Activated CD8-positive, alpha-beta T cell treated with anti-CD3 and anti-CD28 coated beads for 36 hours (primary cell): ENCODE measurements at regions of chr16 and their contacts with region 1.

Region 1: DNA sequence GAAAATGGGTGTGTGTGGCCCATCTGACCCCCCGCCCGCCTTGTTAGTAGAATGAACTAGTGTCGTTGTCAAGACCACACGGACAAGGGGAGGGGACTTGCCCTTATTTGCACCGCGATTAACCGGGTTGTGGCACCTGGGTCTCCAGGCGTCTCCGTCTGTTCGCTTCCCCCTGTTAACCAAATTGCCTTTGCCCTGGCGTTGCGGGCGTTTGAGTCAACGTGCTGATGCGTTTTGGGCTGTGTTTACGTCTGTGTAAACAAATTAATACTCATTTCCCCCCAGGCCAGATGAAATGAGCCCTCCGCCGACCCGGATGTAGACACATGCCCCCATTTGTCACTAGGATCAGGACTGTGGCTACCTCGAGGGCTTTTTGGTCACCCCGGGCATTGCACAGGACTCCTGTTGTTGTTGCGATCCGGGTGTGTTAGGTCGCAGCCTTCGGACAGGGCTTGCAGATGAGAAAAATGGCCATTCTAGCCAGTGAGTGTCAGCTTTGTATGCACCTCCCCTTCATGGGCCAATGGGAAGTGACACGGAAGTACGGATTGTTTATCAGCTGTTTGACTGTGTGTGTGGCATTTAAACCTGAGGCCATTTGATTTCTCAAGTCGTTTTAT is 906 bp downstream of the RBL2 start:
- DNase-seq: peak; percentile 74
- ATAC-seq: peak; percentile 66
- H3K4me3 Mint-ChIP-seq: peak overlapping the region; percentile 99
- H3K27ac Mint-ChIP-seq: peak overlapping the region; percentile 97
- H3K4me1 Mint-ChIP-seq: peaks cover 36% of the 10 kb centered on the region
- H3K27me3 Mint-ChIP-seq: no peaks in the 10 kb centered on the region
- CTCF ChIP-seq: no peak

Region 2: DNA sequence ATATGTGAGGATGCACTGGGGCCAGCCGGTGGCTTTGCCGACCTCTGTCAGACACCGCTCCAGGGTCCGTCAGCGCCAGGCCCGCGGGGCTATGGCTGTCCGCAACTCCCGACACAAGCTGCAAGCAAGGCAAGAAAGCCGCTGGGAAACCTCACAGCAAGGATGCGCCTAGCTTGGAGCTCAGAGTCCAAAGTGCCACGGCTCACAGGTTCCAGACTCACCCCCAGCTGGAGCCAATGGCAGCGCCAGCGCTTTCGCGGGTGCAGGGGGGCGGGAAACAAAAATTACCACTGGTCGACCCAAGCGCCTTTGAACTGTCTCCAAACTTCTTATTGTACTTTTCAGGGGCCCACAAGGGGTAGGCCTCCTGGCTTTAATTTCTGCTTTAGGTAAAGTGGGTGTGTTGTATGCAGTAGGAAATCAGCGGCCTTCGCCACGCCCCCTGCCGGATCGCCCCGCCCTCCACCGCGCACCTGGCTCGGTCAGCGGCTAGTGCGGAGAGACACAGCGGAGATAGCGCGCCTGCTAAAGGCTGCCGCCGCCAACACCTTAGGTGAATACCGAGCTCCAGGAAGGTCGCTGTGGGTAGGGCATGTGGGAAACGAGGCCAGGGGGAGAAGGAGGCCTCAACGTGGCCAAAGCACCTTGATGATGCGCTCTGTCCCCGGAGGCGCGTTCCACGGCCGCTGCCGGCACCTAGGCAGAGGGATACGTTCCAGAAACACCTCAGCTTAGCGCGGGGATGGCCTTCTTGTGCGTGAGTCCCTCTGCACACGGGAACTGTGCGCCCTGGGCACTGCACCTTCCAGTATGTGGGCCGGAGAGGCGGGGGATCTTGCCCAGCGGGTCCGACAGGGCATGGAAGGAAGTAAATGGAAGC is 61.9 kb before region 1 on chr16:
- CTCF ChIA-PET with region 1: interaction called, 3 read pairs
- POLR2A ChIA-PET with region 1: no interaction called
- intact Hi-C with region 1: loop called (anchors 10 kb)
- DNase-seq: peak; percentile 80
- ATAC-seq: peak; percentile 94
- H3K4me3 Mint-ChIP-seq: peak overlapping the region; percentile 76
- H3K27ac Mint-ChIP-seq: peak overlapping the region; percentile 6
- H3K4me1 Mint-ChIP-seq: peaks cover 21% of the 10 kb centered on the region
- H3K27me3 Mint-ChIP-seq: no peaks in the 10 kb centered on the region
- CTCF ChIP-seq: no peak

Region 3: DNA sequence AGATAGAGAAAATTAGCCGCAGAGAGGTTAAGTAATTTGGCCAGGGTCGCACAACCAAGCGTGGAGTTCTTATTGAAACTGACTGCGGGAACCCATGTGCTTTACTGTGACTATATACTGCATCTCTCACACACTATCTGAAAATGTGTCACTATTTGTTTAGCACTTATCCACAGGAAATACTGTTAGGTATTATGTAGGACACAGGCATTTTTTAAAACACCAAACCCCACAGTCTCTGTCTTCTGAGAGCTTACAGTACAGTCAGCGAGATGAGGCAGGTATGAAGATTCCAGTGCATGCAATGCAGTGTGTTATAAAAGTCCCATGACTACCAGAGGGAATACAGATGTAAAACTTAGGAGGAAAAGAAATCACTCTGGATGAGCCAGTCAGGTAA is 10.4 kb after region 1 on chr16:
- CTCF ChIA-PET with region 1: interaction called, 29 read pairs
- POLR2A ChIA-PET with region 1: interaction called, 26 read pairs
- intact Hi-C with region 1: no loop called
- DNase-seq: no peak
- ATAC-seq: peak; percentile 56
- H3K4me3 Mint-ChIP-seq: peak overlapping the region; percentile 2
- H3K27ac Mint-ChIP-seq: peak overlapping the region; percentile 77
- H3K4me1 Mint-ChIP-seq: peaks cover 44% of the 10 kb centered on the region
- H3K27me3 Mint-ChIP-seq: no peaks in the 10 kb centered on the region
- CTCF ChIP-seq: no peak

Region 4: DNA sequence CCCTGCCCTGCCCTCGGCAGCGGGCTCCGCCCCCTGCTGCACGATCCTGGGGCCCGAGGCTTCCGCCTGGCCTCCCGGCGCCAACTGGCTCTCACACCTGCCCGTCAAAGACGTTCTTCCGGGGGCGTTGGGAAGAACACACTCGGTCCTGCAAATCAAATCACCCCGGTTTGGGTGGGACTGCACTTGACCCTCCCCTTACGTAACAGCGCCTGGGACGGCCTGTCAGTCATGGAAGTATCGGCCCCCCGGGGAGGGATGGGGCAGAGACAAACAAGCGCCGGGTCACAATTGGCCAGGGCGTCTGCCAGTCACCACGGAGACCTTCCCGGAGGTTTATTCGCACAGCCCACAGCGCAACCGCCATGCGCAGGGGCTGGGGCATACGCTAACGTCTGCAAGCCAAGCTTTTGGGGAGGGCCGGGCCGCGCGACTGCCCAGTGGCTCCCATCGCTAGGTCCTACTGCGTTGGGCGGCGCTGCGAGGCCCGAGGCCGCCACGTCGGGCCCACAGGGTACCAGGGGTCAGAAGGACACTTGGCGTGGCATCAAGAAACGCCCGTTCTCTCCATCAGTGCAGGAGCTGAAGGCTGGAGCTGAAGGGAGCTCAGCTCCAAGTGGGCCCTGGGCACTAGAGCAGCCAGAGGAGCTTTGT is 68.2 kb after region 1 on chr16:
- CTCF ChIA-PET with region 1: interaction called, 5 read pairs
- POLR2A ChIA-PET with region 1: interaction called, 24 read pairs
- intact Hi-C with region 1: loop called (anchors 2 kb)
- DNase-seq: peak; percentile 100
- ATAC-seq: peak; percentile 92
- H3K4me3 Mint-ChIP-seq: peak overlapping the region; percentile 95
- H3K27ac Mint-ChIP-seq: peak overlapping the region; percentile 88
- H3K4me1 Mint-ChIP-seq: peaks cover 46% of the 10 kb centered on the region
- H3K27me3 Mint-ChIP-seq: no peaks in the 10 kb centered on the region
- CTCF ChIP-seq: no peak